ENCODE measurements at regions of chr10 and their contacts with region 1.

Region 1: GRCh38 chr10:92816091-92816531 is 32.2 kb upstream of the EXOC6 start:
- DNase-seq: no peak
- H3K4me3 Mint-ChIP-seq: no peak overlapping the region
- H3K27ac Mint-ChIP-seq: no peak overlapping the region
- H3K4me1 Mint-ChIP-seq: peaks cover 30% of the 10 kb centered on the region
- H3K27me3 Mint-ChIP-seq: no peaks in the 10 kb centered on the region
- CTCF ChIP-seq: no peak

Region 2: GRCh38 chr10:92381543-92381954 is 434.6 kb before region 1 on chr10:
- CTCF ChIA-PET with region 1: no interaction called
- intact Hi-C with region 1: no loop called
- DNase-seq: no peak
- H3K4me3 Mint-ChIP-seq: no peak overlapping the region
- H3K27ac Mint-ChIP-seq: no peak overlapping the region
- H3K4me1 Mint-ChIP-seq: no peaks in the 10 kb centered on the region
- H3K27me3 Mint-ChIP-seq: no peaks in the 10 kb centered on the region
- CTCF ChIP-seq: no peak

Region 3: GRCh38 chr10:92799591-92800446 is 16.3 kb before region 1 on chr10:
- CTCF ChIA-PET with region 1: no interaction called
- intact Hi-C with region 1: loop called (anchors 2 kb)
- DNase-seq: peak; percentile 14
- H3K4me3 Mint-ChIP-seq: peak overlapping the region; percentile 21
- H3K27ac Mint-ChIP-seq: peak overlapping the region; percentile 55
- H3K4me1 Mint-ChIP-seq: peaks cover 9% of the 10 kb centered on the region
- H3K27me3 Mint-ChIP-seq: no peaks in the 10 kb centered on the region
- CTCF ChIP-seq: no peak